Mammary epithelial cell (primary cell): ENCODE measurements at regions of chr6 and their contacts with region 1.

Region 1: GRCh38 chr6:130215526-130215925 is 7.2 kb downstream of the SAMD3 start:
- DNase-seq: no peak
- H3K4me3 ChIP-seq: no peak overlapping the region
- H3K27ac ChIP-seq: no peak overlapping the region
- H3K4me1 ChIP-seq: no peaks in the 10 kb centered on the region
- H3K27me3 ChIP-seq: peaks cover 9% of the 10 kb centered on the region
- CTCF ChIP-seq: no peak

Region 2: GRCh38 chr6:130178692-130179091 is 36.8 kb before region 1 on chr6:
- CTCF ChIA-PET with region 1: no interaction called
- dilution Hi-C with region 1: loop called (anchors 5 kb)
- in situ Hi-C with region 1: no loop called
- intact Hi-C with region 1: no loop called
- DNase-seq: peak; percentile 85
- H3K4me3 ChIP-seq: no peak overlapping the region
- H3K27ac ChIP-seq: no peak overlapping the region
- H3K4me1 ChIP-seq: peaks cover 10% of the 10 kb centered on the region
- H3K27me3 ChIP-seq: no peaks in the 10 kb centered on the region
- CTCF ChIP-seq: no peak